SK-N-SH (cell line): ENCODE measurements at regions of chr17 and their contacts with region 1.

Region 1: DNA sequence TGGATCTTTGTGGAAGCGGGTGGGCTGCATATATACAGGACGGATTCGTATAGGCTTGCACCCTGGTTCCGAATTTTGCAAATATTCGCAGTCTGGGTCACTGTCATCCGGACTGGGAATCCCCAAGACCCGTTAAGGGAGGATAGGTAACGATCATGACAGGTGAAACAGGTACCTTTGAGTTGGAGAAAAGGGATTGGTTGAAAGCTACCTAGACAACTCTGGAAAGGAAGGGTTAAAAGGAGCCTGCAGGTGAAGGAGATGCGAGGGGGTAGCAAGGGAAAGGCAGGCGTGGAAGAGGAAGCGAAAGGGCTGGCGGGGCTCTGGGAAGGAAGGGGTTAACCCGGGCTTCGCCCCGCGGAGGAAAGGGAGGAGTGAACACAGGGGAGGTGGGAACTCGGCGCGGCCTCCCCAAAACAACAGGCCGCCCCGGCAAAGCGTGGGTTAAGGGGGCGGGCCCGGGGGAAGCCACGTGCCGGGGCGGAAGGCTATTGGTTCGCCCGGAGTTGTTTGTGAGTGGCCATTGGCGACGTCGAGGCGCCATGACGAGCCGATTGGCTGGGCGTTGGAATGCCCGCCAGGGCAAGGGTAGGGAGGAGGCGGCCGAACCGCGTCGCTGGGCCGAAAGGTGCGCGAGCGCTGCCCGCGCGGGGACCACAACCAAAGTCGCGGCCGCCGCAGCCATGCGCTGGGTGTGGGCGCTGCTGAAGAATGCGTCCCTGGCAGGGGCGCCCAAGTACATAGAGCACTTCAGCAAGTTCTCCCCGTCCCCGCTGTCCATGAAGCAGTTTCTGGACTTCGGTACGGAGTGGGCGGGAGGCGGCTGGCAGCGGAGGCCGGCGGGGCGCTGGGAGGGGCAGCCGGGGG is at the start of gene PDK2:
- DNase-seq: peak; percentile 100
- H3K4me3 ChIP-seq: peak within 1 kb of the TSS; percentile 75 to 84
- H3K27ac ChIP-seq: peak within 1 kb of the TSS; percentile 64 to 83
- H3K4me1 ChIP-seq: peaks cover 3 to 18% of the 10 kb centered on the region in 2 experiments; a peak in 1 of 4 replicates
- H3K27me3 ChIP-seq: no peaks in the 10 kb centered on the region
- CTCF ChIP-seq: no peak
- EP300 ChIP-seq: peak in 1 of 2 experiments; percentile 5; a peak in 1 of 4 replicates
- RAD21 ChIP-seq: no peak
- polyA plus RNA-seq, gene PDK2: 96.1 and 124 TPM in 2 replicates

Region 2: GRCh38 chr17:49667854-49668253 is 427.1 kb before region 1 on chr17:
- CTCF ChIA-PET with region 1: no interaction called
- POLR2A ChIA-PET with region 1: no interaction called
- DNase-seq: no peak
- H3K4me3 ChIP-seq: no peak overlapping the region
- H3K27ac ChIP-seq: no peak overlapping the region
- H3K4me1 ChIP-seq: no peaks in the 10 kb centered on the region; a peak in 3 of 4 replicates
- H3K27me3 ChIP-seq: no peaks in the 10 kb centered on the region
- CTCF ChIP-seq: no peak
- EP300 ChIP-seq: no peak
- RAD21 ChIP-seq: no peak

Region 3: DNA sequence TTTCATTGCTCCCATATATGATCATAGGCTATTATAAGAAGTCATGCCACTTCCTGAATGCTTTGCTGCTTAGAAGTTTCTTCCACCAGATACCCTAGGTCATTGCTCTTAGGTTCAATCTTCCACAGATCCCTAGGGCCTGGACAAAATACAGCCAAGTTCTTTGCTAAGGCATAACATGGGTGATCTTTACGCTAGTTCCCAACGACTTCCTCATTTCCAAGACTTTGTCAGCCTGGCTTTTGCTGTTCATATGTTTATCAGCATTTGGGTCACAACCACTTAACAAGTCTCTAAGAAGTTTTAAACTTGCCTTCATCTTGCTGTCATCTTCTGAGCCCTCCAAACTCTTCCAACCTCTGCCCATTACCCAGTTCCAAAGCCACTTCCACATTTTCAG is 79.8 kb before region 1 on chr17:
- CTCF ChIA-PET with region 1: interaction called, 12 read pairs
- POLR2A ChIA-PET with region 1: no interaction called
- DNase-seq: no peak
- H3K4me3 ChIP-seq: no peak overlapping the region
- H3K27ac ChIP-seq: no peak overlapping the region
- H3K4me1 ChIP-seq: no peaks in the 10 kb centered on the region
- H3K27me3 ChIP-seq: no peaks in the 10 kb centered on the region
- CTCF ChIP-seq: no peak
- EP300 ChIP-seq: no peak
- RAD21 ChIP-seq: no peak

Region 4: GRCh38 chr17:50055426-50056230 is 39.4 kb before region 1 on chr17 and contains the start of gene ITGA3:
- CTCF ChIA-PET with region 1: interaction called, 44 read pairs
- POLR2A ChIA-PET with region 1: interaction called, 3 read pairs
- DNase-seq: peak; percentile 93
- H3K4me3 ChIP-seq: peak within 1 kb of the TSS; percentile 90 to 91
- H3K27ac ChIP-seq: peak within 1 kb of the TSS; percentile 90 to 100
- H3K4me1 ChIP-seq: peaks cover 64 to 65% of the 10 kb centered on the region in 2 experiments
- H3K27me3 ChIP-seq: no peaks in the 10 kb centered on the region
- CTCF ChIP-seq: no peak; the same call in 1 of the 2 replicates
- EP300 ChIP-seq: peak in 1 of 2 experiments; percentile 66; a peak in 1 of 4 replicates
- RAD21 ChIP-seq: peak; percentile 2; the same call in 1 of the 2 replicates
- polyA plus RNA-seq, gene ITGA3: 543 and 766 TPM in 2 replicates

Region 5: GRCh38 chr17:50079334-50080095 is 15.5 kb before region 1 on chr17:
- CTCF ChIA-PET with region 1: interaction called, 26 read pairs
- POLR2A ChIA-PET with region 1: no interaction called
- DNase-seq: no peak
- H3K4me3 ChIP-seq: no peak overlapping the region
- H3K27ac ChIP-seq: peak overlapping the region in 1 of 2 experiments; percentile 50; a peak in 1 of 4 replicates
- H3K4me1 ChIP-seq: no peaks in the 10 kb centered on the region
- H3K27me3 ChIP-seq: no peaks in the 10 kb centered on the region
- CTCF ChIP-seq: peak; percentile 71
- EP300 ChIP-seq: no peak
- RAD21 ChIP-seq: no peak; the same call in 1 of the 2 replicates

Region 6: GRCh38 chr17:50129728-50130558 is 35.0 kb after region 1 on chr17 and contains the start of gene SAMD14:
- CTCF ChIA-PET with region 1: interaction called, 18 read pairs
- POLR2A ChIA-PET with region 1: interaction called, 9 read pairs
- DNase-seq: peak; percentile 96
- H3K4me3 ChIP-seq: peak within 1 kb of the TSS; percentile 61 to 70
- H3K27ac ChIP-seq: peak within 1 kb of the TSS in 1 of 2 experiments; percentile 69; a peak in 1 of 4 replicates
- H3K4me1 ChIP-seq: peaks cover 20 to 23% of the 10 kb centered on the region in 2 experiments; a peak in 3 of 4 replicates
- H3K27me3 ChIP-seq: no peaks in the 10 kb centered on the region
- CTCF ChIP-seq: no peak
- EP300 ChIP-seq: no peak
- RAD21 ChIP-seq: no peak
- polyA plus RNA-seq, gene SAMD14: 2.8 and 3.4 TPM in 2 replicates

Region 7: DNA sequence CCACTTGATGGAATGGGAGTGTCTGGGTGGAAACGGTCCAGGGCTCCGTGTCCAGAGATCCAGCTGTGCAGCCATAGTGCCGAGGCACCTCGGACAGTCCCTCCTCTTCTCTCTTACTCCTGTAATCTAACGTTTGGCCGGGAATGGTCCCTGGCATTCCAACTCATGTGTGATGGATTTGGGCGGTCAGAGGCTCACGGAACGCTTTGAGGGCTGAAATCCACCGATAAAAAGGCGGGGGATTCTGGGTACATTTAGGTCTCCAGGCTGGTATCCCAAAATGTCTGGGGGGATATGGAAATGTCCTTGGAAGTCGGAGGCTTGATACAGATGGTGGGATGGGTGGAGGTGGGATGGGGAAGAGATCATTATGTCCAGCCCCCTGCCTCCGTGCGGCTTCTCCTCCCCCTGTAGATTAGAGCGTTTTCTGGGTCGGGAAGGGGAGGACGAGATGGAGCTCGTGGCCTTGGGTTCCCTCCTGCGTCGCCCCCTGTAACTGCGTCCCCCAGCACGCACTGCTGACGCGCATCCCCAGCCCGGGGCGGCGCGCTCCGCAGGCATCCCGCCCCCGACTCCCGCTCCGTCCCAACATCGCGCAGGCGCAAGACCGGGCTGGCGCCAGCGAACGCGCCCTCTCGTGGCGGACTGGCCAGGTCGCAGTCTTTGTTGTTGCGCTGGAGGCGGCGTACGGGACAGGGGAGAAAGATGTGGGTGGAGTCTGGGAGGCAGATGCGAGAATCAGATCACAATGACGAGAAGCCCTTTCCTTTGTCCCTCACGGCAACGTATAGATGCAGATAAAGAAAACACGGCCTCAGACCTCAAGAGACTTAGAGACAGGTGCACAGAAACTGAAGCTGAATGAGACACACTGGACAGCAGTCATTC is 66.3 kb after region 1 on chr17:
- CTCF ChIA-PET with region 1: interaction called, 63 read pairs
- POLR2A ChIA-PET with region 1: interaction called, 10 read pairs
- DNase-seq: peak; percentile 100
- H3K4me3 ChIP-seq: peak overlapping the region; percentile 60 to 72
- H3K27ac ChIP-seq: peak overlapping the region; percentile 3 to 91; a peak in 3 of 4 replicates
- H3K4me1 ChIP-seq: peaks cover 3 to 10% of the 10 kb centered on the region in 2 experiments; a peak in 1 of 4 replicates
- H3K27me3 ChIP-seq: no peaks in the 10 kb centered on the region
- CTCF ChIP-seq: peak; percentile 97
- EP300 ChIP-seq: peak in 1 of 2 experiments; percentile 44; a peak in 1 of 4 replicates
- RAD21 ChIP-seq: peak; percentile 72

Region 8: DNA sequence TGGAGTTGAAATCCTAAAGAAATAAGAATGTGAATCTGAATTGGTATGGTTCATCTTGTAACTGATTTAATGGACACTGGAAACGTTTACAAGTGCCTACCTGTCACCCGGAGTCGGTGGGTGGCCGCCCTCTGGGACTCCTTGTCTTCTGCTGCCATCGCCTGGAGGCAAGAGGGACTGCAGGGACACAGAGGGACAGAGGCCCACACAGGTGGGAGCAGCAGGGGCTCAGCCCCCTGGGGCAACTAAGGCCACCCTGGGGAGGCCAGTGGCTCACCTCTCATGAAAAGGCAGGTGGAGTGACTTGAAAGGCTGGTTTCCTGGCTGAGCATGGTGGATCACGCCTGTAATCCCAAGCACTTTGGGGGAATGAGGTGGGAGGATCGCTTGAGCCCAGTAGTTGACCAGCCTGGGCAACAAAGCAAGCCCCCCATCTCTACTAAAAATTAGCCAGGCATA is 202.4 kb after region 1 on chr17:
- CTCF ChIA-PET with region 1: interaction called, 67 read pairs
- POLR2A ChIA-PET with region 1: no interaction called
- DNase-seq: peak; percentile 90
- H3K4me3 ChIP-seq: no peak overlapping the region; a peak in 1 of 4 replicates
- H3K27ac ChIP-seq: no peak overlapping the region
- H3K4me1 ChIP-seq: no peaks in the 10 kb centered on the region
- H3K27me3 ChIP-seq: no peaks in the 10 kb centered on the region
- CTCF ChIP-seq: peak; percentile 99
- EP300 ChIP-seq: no peak
- RAD21 ChIP-seq: peak; percentile 100

Region 9: DNA sequence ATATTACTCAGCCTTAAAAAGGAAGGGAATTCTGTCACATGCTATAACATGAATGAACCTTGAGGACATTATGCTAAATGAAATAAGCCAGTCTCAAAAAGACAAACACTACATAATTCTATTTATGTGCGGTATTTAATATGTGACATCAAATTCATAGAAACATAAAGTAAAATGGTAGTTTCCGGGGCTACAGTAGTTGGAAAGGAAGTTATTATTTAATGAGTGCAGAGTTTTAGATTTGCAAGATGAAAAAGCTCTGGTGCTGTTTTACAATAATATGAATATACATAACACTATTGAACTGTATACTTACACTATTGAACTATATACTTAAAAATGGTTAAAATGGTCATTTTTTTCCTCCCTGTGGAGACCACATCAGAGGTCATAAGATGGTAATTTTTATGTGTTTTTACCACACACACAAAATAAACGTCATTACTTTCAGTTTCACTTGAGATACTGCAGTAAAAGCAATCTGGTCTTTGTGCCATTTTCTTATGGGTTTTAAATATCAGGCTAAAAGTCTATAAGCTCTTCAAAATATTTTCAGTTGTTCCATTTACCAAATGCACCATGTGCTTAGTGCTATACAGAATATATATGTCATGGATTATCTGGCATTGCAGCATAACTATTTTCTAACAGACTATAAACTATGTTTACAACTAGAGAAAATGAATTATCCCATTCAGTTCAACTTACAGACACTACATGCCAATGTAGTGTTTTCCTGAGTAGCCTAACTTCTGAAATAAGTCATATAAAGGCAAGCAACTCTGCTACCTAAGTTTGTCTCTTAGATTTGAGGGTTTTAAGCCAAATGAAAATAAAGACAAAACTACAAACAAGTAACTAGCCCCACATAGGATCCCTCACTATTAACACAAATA is 934.8 kb after region 1 on chr17:
- CTCF ChIA-PET with region 1: no interaction called
- POLR2A ChIA-PET with region 1: no interaction called
- DNase-seq: no peak
- H3K4me3 ChIP-seq: peak overlapping the region in 1 of 2 experiments; percentile 24; a peak in 3 of 4 replicates
- H3K27ac ChIP-seq: peak overlapping the region; percentile 18 to 59; a peak in 2 of 4 replicates
- H3K4me1 ChIP-seq: peaks cover under 1 to 11% of the 10 kb centered on the region in 2 experiments; a peak in 3 of 4 replicates
- H3K27me3 ChIP-seq: no peaks in the 10 kb centered on the region
- CTCF ChIP-seq: no peak
- EP300 ChIP-seq: no peak
- RAD21 ChIP-seq: no peak